GM10248 (cell line): ENCODE measurements at regions of chr1 and their contacts with region 1.

Region 1: DNA sequence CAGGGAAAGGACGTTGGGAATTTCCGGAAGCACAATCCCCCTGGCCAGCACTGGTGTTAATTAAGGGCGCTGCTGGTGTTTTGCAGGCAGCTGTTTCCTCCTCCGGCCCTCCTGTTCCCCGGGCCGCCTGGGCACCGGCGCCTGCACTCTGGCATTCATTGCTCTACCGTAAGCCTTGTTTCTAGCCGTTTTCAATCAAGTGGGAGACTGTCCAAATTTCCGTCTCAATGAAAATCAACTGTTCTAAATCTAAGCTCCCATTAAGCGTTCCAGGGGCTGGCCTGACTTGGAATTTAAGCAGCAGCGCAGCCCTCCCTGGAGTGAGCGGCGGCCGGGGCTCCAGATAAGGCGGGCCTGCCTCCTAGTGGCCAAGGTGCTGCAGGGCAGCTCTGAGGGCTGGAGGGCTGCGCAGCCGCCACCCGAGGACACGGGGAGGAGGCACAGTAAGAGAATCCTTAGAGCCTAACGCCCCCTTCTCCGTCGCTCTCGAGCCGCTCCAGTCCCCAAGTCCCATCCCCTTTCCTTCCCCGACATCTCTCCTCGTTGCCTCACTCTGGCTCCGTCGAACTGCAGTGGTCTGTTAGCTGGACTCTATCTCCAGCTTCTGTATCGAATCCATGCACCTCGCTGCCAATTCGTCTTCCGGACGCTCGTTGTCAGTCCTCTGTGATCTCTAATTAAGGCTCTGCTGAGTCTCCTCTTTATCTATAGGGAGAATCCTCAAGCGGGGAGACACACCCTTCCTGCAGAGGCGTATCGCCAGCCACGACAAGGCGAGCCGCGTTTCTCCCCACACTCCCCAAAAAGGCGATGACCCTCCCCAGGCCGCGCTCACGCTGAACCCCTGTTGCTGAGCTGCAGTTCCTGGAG is 57.8 kb upstream of the LRRC8D start:
- DNase-seq: peak; percentile 88
- CTCF ChIP-seq: peak; percentile 100

Region 2: GRCh38 chr1:89524369-89525168 is 238.4 kb before region 1 on chr1 and contains the start of gene LRRC8B:
- CTCF ChIA-PET with region 1: interaction called, 14 read pairs
- POLR2A ChIA-PET with region 1: interaction called, 4 read pairs
- DNase-seq: peak; percentile 88
- CTCF ChIP-seq: no peak

Region 3: GRCh38 chr1:89603651-89604413 is 159.2 kb before region 1 on chr1:
- CTCF ChIA-PET with region 1: interaction called, 36 read pairs
- POLR2A ChIA-PET with region 1: no interaction called
- DNase-seq: no peak
- CTCF ChIP-seq: no peak

Region 4: GRCh38 chr1:89632657-89633247 is 130.3 kb before region 1 on chr1 and contains the start of gene LRRC8C:
- CTCF ChIA-PET with region 1: interaction called, 105 read pairs
- POLR2A ChIA-PET with region 1: no interaction called
- DNase-seq: peak; percentile 87
- CTCF ChIP-seq: peak; percentile 83

Region 5: GRCh38 chr1:89675677-89676076 is 87.3 kb before region 1 on chr1:
- CTCF ChIA-PET with region 1: interaction called, 24 read pairs
- POLR2A ChIA-PET with region 1: no interaction called
- DNase-seq: no peak
- CTCF ChIP-seq: no peak

Region 6: DNA sequence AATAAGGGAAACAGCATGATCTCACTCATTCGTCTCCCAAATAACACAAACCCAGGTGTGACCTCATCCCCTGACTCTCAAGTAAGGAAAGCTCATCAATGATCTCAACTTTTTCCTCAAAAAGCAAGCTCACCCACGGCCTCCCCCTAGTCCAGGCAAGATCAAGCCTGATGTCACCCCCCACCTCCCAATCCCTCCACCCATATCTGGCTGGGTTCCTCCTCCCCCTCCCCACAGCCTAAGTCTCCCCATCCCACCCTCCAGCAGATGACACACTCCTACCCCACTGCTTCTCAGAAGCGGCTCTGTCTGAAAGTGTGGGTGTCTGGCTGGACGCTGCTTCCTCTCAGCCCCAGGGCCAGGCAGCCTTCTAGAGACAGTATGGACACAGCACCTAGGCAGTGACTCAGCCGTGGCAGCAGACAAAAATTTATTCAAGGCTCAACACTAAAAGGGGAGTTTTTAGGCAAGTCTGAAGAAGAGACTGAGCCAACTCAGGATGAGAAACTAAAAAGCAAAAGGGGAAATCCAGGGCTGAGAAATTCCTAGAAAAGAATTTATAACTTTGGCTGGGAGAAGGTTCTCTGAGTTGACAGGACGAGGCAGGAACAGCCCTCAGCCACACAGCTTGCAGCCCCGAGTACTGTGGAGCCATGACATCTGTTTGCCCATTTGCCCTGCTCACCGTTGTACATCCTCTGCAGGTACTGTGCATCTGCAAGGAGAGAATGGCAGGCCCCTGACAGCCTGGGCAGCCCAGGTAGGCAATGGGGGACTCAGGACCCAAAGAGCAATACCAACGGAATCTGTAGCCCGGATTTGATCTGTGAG is 23.8 kb before region 1 on chr1:
- CTCF ChIA-PET with region 1: interaction called, 23 read pairs
- POLR2A ChIA-PET with region 1: no interaction called
- DNase-seq: peak; percentile 32
- CTCF ChIP-seq: no peak

Region 7: DNA sequence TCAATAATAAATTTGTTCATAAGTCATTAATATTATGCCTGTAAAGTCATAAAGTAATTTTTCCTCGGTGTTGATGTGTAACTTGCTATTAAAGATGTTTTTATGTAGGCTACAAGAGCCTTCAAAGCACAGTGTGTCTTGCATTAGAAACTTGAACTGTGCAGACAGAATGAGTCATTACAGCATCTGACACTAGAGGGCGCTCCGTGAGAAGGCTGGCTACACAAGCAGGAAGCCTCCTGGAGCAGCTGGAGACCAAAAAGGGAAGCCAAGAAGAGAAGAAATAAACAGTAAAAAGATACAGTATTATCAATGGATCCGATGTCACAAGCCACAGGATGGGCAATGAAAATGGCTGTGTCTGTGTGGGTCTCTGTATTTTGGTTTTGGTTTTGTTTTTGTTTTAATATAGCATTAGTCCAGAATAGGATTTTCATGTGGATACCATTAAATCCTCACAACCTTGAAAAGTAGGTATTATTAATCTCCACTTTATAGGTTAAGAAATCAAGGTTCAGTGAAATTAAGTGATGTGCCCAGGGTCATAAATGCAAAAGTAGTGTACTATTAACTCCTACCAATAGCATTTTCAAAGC is 41.7 kb after region 1 on chr1:
- CTCF ChIA-PET with region 1: interaction called, 10 read pairs
- POLR2A ChIA-PET with region 1: no interaction called
- DNase-seq: peak; percentile 71
- CTCF ChIP-seq: peak; percentile 96

Region 8: DNA sequence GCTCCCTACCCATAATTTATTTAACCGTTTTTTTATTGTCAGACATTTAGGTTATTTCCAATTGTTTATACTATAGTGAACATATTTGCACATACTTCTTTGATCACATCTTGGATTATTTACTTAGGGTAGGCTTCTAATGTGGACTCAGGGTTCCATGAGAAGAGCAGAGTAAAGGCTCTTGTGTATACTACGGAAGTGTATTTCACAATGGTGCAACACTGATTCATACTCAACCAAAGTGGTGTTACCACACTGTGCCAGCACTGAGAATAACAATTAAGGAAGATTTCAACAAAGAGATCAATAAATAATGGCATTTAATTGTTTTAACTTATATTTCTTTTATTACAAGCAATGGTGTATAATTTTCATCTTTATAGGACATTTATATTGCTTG is 483.1 kb after region 1 on chr1:
- CTCF ChIA-PET with region 1: no interaction called
- POLR2A ChIA-PET with region 1: no interaction called
- DNase-seq: no peak
- CTCF ChIP-seq: no peak